ENCODE measurements at regions of chr1 and their contacts with region 1.

Region 1: DNA sequence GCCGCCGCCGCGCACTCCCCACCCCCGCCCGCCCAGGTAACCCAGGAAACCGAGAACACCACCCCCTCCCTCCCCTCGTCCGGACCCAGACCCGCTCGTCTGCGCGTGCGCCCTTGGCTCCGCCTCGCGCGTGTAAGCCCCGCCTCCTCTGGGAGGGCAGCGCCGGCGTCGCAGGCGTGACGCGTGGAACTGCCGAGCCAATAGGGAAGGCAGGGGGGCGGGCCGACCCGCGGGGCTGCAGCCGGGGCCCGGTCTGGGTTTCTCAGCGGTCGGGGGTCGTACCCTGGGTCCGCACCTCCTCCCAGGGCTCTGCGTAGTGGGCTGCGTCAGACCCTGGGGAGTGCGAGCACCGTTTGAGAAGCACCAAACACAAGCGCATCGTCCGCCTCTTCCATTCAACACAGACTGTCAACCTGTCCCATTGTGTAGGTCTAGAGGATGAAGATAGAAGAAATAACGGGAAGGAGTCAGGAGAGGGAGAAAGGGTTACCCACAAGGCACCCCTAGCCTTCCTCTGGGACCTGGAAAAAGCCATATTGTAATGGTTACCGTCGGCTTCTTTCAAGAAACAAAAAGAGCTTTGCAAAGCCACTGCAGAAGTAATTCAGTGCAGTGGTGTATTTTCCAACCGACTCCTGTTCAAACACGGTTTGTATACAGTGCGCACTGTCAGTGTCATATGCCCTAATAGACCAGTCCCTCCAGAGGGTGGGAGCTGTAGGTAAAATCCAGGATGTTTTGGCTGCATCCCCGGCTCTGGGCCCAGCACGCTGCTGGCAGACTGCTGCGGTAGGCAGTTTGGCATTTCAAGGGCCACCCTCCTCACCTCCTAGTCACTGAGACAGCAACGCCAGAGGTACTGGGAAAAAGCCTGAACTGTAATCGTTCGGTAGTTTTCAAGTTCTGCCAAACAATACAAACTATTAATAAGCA is 473 bp upstream of the LYST start:
- DNase-seq: peak; percentile 99
- H3K4me3 Mint-ChIP-seq: peak overlapping the region; percentile 99
- H3K27ac Mint-ChIP-seq: peak overlapping the region; percentile 95
- H3K4me1 Mint-ChIP-seq: peaks cover 35% of the 10 kb centered on the region
- H3K27me3 Mint-ChIP-seq: no peaks in the 10 kb centered on the region
- CTCF ChIP-seq: no peak

Region 2: GRCh38 chr1:235767795-235768194 is 99.4 kb before region 1 on chr1:
- CTCF ChIA-PET with region 1: no interaction called
- POLR2A ChIA-PET with region 1: no interaction called
- intact Hi-C with region 1: no loop called
- DNase-seq: no peak
- H3K4me3 Mint-ChIP-seq: no peak overlapping the region
- H3K27ac Mint-ChIP-seq: no peak overlapping the region
- H3K4me1 Mint-ChIP-seq: no peaks in the 10 kb centered on the region
- H3K27me3 Mint-ChIP-seq: no peaks in the 10 kb centered on the region
- CTCF ChIP-seq: no peak

Region 3: GRCh38 chr1:235855811-235856429 is 11.3 kb before region 1 on chr1:
- CTCF ChIA-PET with region 1: interaction called, 10 read pairs
- POLR2A ChIA-PET with region 1: interaction called, 26 read pairs
- intact Hi-C with region 1: no loop called
- DNase-seq: no peak
- H3K4me3 Mint-ChIP-seq: no peak overlapping the region
- H3K27ac Mint-ChIP-seq: no peak overlapping the region
- H3K4me1 Mint-ChIP-seq: peaks cover 20% of the 10 kb centered on the region
- H3K27me3 Mint-ChIP-seq: no peaks in the 10 kb centered on the region
- CTCF ChIP-seq: no peak

Region 4: DNA sequence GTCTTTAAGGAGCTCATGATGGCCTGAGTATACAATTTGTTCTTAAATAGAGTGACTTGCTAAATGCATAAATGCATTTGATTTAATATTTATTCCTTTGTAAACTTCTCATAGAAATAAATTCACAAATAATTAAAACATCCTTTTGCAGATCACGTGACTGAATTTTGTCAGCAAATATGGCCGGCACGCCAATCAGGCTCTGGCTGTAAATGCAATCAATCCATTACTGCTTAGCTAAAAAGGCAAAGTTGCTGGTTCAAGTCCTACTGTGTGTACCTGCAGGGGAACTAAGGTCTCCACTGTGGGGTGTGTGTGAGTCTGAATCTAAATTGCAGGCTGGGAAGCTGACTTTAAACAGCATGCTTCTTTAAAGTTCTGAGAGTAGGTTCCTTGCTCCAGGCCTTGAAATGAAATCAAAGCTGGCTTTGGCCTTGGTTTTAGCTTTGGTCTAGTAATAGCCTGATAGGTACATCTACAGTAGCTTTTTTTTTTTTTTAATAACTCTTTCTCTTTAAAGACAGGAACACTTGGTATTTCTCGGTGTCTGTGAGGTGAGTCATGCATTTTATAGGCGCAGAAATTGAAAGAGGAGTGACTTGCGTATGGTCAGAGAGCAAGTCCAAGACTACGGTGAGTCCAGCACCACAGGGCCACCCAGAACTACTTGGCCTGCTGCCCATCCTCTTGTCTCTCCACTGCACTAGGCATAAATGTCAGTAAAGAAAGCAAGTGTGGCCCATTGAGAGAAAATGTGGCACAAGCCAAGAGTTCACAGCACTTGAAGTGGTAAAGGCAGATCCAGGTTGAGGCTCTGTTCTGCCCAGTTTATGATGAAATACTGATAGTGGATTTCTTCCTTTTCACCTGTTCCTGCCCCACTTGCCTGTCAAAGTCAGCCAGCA is 35.7 kb after region 1 on chr1:
- CTCF ChIA-PET with region 1: interaction called, 65 read pairs
- POLR2A ChIA-PET with region 1: interaction called, 98 read pairs
- intact Hi-C with region 1: no loop called
- DNase-seq: peak; percentile 99
- H3K4me3 Mint-ChIP-seq: peak overlapping the region; percentile 15
- H3K27ac Mint-ChIP-seq: peak overlapping the region; percentile 61
- H3K4me1 Mint-ChIP-seq: peaks cover 44% of the 10 kb centered on the region
- H3K27me3 Mint-ChIP-seq: no peaks in the 10 kb centered on the region
- CTCF ChIP-seq: no peak

Region 5: GRCh38 chr1:235923466-235924021 is 56.4 kb after region 1 on chr1:
- CTCF ChIA-PET with region 1: interaction called, 47 read pairs
- POLR2A ChIA-PET with region 1: interaction called, 166 read pairs
- intact Hi-C with region 1: no loop called
- DNase-seq: no peak
- H3K4me3 Mint-ChIP-seq: no peak overlapping the region
- H3K27ac Mint-ChIP-seq: peak overlapping the region; percentile 14
- H3K4me1 Mint-ChIP-seq: peaks cover 44% of the 10 kb centered on the region
- H3K27me3 Mint-ChIP-seq: no peaks in the 10 kb centered on the region
- CTCF ChIP-seq: no peak

Region 6: DNA sequence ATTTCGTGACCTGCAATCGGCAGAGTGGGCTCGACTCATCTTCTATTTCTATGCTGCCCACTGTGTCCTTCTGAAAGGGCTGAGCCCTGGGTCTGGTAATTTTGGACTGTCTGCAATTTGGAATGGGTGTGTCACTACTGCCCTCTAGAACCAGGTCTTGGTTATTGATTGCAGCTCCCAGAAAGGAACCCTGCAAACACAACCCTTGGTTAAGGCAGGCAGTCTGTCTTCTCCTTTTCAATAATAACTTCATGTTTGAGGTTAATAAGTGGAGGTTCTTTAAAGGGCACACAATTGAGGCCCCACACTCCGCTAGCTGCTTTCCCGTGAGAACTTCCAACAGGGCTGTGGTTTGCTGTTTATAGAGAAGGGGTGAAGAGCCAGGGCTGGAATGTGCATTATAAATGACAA is 79.4 kb after region 1 on chr1:
- CTCF ChIA-PET with region 1: interaction called, 45 read pairs
- POLR2A ChIA-PET with region 1: interaction called, 61 read pairs
- intact Hi-C with region 1: loop called (anchors 1 kb)
- DNase-seq: peak; percentile 77
- H3K4me3 Mint-ChIP-seq: no peak overlapping the region
- H3K27ac Mint-ChIP-seq: no peak overlapping the region
- H3K4me1 Mint-ChIP-seq: peaks cover 47% of the 10 kb centered on the region
- H3K27me3 Mint-ChIP-seq: no peaks in the 10 kb centered on the region
- CTCF ChIP-seq: peak; percentile 75